AG04449 (cell line): ENCODE measurements at regions of chr1 and their contacts with region 1.

Region 1: GRCh38 chr1:202122639-202123335 is at the start of gene GPR37L1:
- DNase-seq: no peak
- H3K4me3 ChIP-seq: no peak within 1 kb of the TSS
- CTCF ChIP-seq: peak; percentile 54

Region 2: GRCh38 chr1:201831371-201831770 is 291.4 kb before region 1 on chr1:
- CTCF ChIA-PET with region 1: no interaction called
- POLR2A ChIA-PET with region 1: no interaction called
- DNase-seq: no peak
- H3K4me3 ChIP-seq: no peak overlapping the region
- CTCF ChIP-seq: no peak

Region 3: GRCh38 chr1:201877877-201878401 is 244.8 kb before region 1 on chr1:
- CTCF ChIA-PET with region 1: interaction called, 10 read pairs
- POLR2A ChIA-PET with region 1: no interaction called
- DNase-seq: no peak
- H3K4me3 ChIP-seq: no peak overlapping the region
- CTCF ChIP-seq: peak; percentile 66

Region 4: DNA sequence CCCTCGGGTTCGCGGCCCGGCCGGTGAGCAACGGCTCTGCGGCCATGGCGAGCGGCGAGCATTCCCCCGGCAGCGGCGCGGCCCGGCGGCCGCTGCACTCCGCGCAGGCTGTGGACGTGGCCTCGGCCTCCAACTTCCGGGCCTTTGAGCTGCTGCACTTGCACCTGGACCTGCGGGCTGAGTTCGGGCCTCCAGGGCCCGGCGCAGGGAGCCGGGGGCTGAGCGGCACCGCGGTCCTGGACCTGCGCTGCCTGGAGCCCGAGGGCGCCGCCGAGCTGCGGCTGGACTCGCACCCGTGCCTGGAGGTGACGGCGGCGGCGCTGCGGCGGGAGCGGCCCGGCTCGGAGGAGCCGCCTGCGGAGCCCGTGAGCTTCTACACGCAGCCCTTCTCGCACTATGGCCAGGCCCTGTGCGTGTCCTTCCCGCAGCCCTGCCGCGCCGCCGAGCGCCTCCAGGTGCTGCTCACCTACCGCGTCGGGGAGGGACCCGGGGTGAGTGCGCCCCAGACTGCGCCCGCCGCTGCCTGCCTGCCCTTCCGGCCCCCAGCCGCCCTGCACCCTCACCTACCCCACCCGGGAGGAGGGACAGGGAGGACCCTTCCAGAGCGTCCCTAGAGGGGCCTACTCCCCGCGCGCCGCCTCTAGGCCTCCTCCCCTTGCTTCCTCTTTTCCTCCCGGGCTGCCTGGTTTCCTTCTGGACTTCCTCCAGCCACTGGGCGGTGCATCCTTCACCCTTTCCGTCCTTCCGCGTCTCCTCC is 140.0 kb before region 1 on chr1 and contains the start of gene RNPEP:
- CTCF ChIA-PET with region 1: interaction called, 11 read pairs
- POLR2A ChIA-PET with region 1: no interaction called
- DNase-seq: no peak
- H3K4me3 ChIP-seq: peak within 1 kb of the TSS; percentile 76
- CTCF ChIP-seq: no peak

Region 5: GRCh38 chr1:202009326-202010179 is 113.2 kb before region 1 on chr1:
- CTCF ChIA-PET with region 1: interaction called, 956 read pairs
- POLR2A ChIA-PET with region 1: no interaction called
- DNase-seq: peak; percentile 41
- H3K4me3 ChIP-seq: no peak overlapping the region
- CTCF ChIP-seq: peak; percentile 74

Region 6: GRCh38 chr1:202105539-202106276 is 17.1 kb before region 1 on chr1:
- CTCF ChIA-PET with region 1: interaction called, 67 read pairs
- POLR2A ChIA-PET with region 1: no interaction called
- DNase-seq: no peak
- H3K4me3 ChIP-seq: no peak overlapping the region
- CTCF ChIP-seq: no peak

Region 7: GRCh38 chr1:202135221-202135721 is 12.5 kb after region 1 on chr1:
- CTCF ChIA-PET with region 1: interaction called, 149 read pairs
- POLR2A ChIA-PET with region 1: no interaction called
- DNase-seq: no peak
- H3K4me3 ChIP-seq: no peak overlapping the region
- CTCF ChIP-seq: peak; percentile 85